ENCODE measurements at regions of chr1 and their contacts with region 1.

Region 1: DNA sequence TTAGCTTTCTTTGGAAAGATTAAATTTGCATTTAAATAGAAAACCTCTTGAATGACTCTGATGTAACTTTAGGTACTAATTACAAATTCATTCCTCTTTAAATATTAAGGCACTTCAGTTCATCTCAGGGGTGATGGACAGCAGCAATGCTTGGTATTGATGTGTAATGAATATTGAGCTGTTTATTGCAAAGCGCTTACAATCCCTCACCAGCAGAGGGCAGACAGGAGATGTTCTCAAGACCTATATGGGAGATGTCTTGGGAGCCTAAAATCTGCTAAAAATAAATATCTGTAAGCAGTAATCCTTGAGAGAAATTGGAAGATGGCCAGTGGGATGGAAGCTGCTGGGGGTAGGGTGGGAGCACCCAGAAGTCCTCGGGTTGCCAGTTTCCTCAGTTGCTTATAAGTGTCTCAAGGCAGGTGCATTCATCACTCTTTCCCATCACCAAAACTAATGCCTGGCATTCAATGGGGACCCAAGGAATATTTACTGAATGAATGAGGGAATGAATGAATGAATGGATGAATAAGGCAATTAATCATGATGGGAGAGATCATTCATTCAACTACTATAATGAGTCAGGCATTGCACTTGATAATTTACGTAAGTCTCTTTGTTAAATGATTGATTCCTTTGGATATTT is 2.3 kb downstream of the KLHDC8A start:
- DNase-seq: peak in 5 of 10 donors; percentile 52 to 83 (median 66)
- H3K4me3 ChIP-seq: no peak overlapping the region
- H3K27ac ChIP-seq: peak overlapping the region in 3 of 59 donors; percentile 22 to 40 (median 36)
- H3K27me3 ChIP-seq: no peaks in the 10 kb centered on the region
- CTCF ChIP-seq: peak; percentile 72 to 95 (median 86)

Region 2: GRCh38 chr1:205422993-205423625 is 68.7 kb after region 1 on chr1:
- intact Hi-C with region 1: loop called in 1 of 2 experiments (anchors 10 kb)
- DNase-seq: no peak
- H3K4me3 ChIP-seq: no peak overlapping the region
- H3K27ac ChIP-seq: no peak overlapping the region
- H3K27me3 ChIP-seq: no peaks in the 10 kb centered on the region
- CTCF ChIP-seq: peak in 4 of 56 donors; percentile 20 to 26 (median 22)

Region 3: DNA sequence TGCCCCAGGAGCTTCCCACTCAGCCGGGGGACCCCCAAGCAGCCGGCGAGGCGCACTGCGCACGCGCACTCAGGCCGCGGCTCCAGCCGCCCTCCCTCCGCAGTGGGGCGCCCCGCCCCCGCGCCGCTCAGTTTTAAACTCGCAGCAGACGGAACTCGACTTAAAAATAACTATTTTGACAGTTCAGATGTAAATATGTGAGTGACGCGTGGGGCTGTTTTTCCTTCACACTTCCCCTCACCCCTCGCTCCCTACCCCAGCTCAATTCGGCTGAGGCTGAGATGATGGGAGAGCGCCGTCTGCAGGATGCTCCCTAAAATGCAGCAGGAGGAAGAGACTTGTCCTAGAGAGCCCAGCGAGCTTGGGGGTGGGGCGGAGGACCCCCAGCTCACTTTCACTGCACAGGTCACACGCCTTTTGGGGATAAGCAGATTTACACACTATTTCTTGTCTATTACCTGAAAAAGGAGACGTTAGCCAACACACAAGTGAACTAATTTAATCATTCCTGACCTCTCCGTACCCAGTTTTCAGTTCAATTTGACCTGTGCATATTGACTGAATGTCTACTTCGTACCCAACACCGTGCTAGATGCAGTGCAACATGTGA is 76.4 kb after region 1 on chr1:
- intact Hi-C with region 1: loop called (anchors 5 to 10 kb)
- DNase-seq: peak in 8 of 10 donors; percentile 58 to 79 (median 70)
- H3K4me3 ChIP-seq: peak overlapping the region; percentile 36 to 73 (median 59)
- H3K27ac ChIP-seq: peak overlapping the region in 33 of 59 donors; percentile 4 to 81 (median 46)
- H3K27me3 ChIP-seq: no peaks in the 10 kb centered on the region
- CTCF ChIP-seq: peak; percentile 43 to 94 (median 84)

Region 4: GRCh38 chr1:205480349-205480985 is 126.1 kb after region 1 on chr1:
- intact Hi-C with region 1: loop called (anchors 1 to 5 kb)
- DNase-seq: no peak
- H3K4me3 ChIP-seq: no peak overlapping the region
- H3K27ac ChIP-seq: no peak overlapping the region
- H3K27me3 ChIP-seq: peaks cover 0 to 13% (median 0%) of the 10 kb centered on the region in 45 donors
- CTCF ChIP-seq: no peak